Right ventricle myocardium inferior (tissue), 1 donor: ENCODE measurements at regions of chr10 and their contacts with region 1.

Region 1: GRCh38 chr10:110354322-110354766 is 49.6 kb upstream of the SMNDC1 start:
- DNase-seq: no peak
- ATAC-seq: peak; percentile 82

Region 2: GRCh38 chr10:110239893-110240292 is 114.5 kb before region 1 on chr10:
- intact Hi-C with region 1: no loop called
- DNase-seq: no peak
- ATAC-seq: no peak

Region 3: DNA sequence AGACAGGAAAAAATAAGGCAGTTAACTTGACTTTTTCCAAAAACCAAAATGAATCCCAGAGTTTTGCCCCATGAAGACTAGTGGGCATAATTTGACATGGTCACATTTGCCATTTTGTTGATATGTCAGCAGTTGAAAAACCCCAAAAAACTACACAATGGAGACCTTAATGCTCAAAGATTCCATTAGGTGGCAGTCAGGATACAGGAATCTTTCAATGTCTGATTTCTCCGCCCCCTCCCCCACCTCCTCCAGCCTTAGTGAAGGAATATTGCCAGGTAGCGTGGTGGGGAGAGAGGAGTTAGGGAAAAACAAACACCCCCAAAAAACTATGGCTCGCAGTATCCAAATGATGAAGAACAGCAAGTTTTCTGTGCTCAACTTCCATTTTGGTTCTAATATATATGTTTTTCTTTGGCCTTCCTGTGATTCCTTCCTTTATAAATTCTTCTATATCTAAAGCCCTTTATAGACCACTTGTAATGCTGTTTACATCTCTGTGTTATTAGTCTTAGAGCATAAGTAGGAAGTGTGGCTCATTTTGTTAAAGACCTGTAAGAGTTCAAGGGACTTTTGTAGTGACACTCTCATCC is 42.9 kb before region 1 on chr10:
- intact Hi-C with region 1: loop called (anchors 5 kb)
- DNase-seq: no peak
- ATAC-seq: peak; percentile 50